Activated naive CD4-positive, alpha-beta T cell treated with anti-CD3 and anti-CD28 coated beads for 36 hours (primary cell): ENCODE measurements at regions of chr2 and their contacts with region 1.

Region 1: DNA sequence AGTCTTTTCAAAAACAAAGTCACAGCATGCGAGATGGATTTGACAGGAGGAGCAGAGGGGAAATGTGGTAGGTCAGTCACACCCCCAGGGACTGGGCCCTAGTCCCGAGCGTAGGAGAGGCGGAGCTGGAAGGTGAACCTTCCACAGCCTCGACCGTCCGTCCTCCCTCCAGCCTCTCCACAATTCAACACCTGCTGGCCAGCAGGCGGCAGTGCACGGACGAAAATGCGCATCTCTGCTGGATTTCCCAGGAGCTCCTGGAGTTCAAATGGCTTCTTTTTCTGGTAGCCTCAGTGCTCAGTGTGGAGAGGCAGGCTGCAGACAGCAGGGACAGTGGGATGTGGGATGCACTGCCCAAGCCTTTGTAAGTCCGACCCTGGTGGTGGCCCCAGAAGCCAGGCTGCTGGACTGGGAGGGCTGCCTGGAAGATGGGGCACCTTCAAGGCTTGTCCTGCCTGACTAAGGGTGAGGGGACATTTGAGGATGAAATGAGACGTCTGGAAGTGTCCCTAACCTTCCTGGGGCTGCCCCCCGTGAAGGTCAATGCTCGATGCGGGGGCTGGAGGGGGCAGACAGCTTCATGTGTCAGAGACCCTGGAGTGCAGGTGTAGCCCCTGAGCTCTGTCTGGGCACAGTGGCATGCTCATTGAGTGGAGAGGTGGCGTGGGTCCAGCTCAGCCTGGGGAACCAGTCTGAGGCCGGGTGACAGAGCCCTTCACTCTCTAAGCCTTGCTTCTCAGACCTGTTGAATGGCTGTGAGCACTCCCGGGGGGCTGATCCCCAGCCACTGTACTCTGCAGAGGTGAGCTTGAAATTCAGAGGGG is 189.5 kb downstream of the TFCP2L1 start:
- DNase-seq: peak; percentile 53
- H3K4me3 Mint-ChIP-seq: no peak overlapping the region
- H3K27ac Mint-ChIP-seq: no peak overlapping the region
- H3K4me1 Mint-ChIP-seq: no peaks in the 10 kb centered on the region
- H3K27me3 Mint-ChIP-seq: peaks cover 5% of the 10 kb centered on the region

Region 2: GRCh38 chr2:120294008-120294340 is 801.5 kb before region 1 on chr2:
- CTCF ChIA-PET with region 1: no interaction called
- intact Hi-C with region 1: no loop called
- DNase-seq: no peak
- H3K4me3 Mint-ChIP-seq: no peak overlapping the region
- H3K27ac Mint-ChIP-seq: no peak overlapping the region
- H3K4me1 Mint-ChIP-seq: peaks cover 4% of the 10 kb centered on the region
- H3K27me3 Mint-ChIP-seq: no peaks in the 10 kb centered on the region

Region 3: GRCh38 chr2:121076885-121077549 is 18.5 kb before region 1 on chr2:
- CTCF ChIA-PET with region 1: interaction called, 22 read pairs
- intact Hi-C with region 1: no loop called
- DNase-seq: peak; percentile 79
- H3K4me3 Mint-ChIP-seq: no peak overlapping the region
- H3K27ac Mint-ChIP-seq: no peak overlapping the region
- H3K4me1 Mint-ChIP-seq: no peaks in the 10 kb centered on the region
- H3K27me3 Mint-ChIP-seq: peaks cover 17% of the 10 kb centered on the region

Region 4: GRCh38 chr2:121356058-121356640 is 260.7 kb after region 1 on chr2:
- CTCF ChIA-PET with region 1: interaction called, 8 read pairs
- intact Hi-C with region 1: loop called (anchors 1 kb)
- DNase-seq: peak; percentile 49
- H3K4me3 Mint-ChIP-seq: no peak overlapping the region
- H3K27ac Mint-ChIP-seq: no peak overlapping the region
- H3K4me1 Mint-ChIP-seq: no peaks in the 10 kb centered on the region
- H3K27me3 Mint-ChIP-seq: no peaks in the 10 kb centered on the region

Region 5: DNA sequence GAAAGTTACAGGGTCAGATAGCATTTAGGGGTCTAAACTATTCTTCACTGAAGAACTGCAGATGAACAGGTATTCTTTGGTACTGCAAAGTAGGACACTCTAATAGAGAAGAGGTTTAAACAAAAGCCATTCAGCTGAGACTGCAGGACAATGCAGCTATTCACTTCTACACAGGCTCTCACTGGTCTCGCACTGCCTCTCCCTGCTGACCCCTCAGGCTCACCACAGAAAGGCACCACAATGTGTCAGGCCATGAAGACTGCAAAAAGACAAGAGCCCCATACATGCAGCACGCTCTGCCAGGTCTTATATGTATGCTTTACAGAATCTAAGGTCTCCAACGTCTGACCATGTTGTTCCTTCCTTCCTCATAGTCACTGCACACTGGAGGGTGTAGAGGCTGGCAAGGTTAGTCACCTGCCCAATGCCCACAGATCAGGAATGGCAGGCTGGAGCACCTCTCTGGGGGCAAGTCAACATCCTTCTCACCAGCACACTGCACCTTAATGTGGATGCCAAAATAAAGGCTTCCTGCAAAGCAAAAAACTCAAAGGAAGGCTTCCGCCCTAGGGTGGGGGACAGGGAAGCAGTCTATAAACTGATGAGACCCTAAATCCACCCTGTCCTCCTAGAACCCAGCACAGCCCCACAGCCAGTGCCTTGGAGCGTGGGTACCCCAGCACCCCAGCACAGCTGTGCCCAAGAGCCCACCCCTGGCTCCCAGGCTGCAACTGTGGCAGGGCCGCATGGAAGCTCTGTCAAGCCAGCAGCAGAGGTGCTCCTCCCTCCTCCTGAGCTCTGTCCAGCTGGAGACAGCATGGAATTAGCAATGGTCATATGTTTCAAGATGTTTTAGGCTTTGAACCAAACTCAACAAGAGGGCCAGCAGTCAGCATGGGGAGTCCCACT is 424.5 kb after region 1 on chr2:
- CTCF ChIA-PET with region 1: no interaction called
- intact Hi-C with region 1: no loop called
- DNase-seq: no peak
- H3K4me3 Mint-ChIP-seq: no peak overlapping the region
- H3K27ac Mint-ChIP-seq: no peak overlapping the region
- H3K4me1 Mint-ChIP-seq: no peaks in the 10 kb centered on the region
- H3K27me3 Mint-ChIP-seq: no peaks in the 10 kb centered on the region